ENCODE measurements at regions of chr2 and their contacts with region 1.

Region 1: DNA sequence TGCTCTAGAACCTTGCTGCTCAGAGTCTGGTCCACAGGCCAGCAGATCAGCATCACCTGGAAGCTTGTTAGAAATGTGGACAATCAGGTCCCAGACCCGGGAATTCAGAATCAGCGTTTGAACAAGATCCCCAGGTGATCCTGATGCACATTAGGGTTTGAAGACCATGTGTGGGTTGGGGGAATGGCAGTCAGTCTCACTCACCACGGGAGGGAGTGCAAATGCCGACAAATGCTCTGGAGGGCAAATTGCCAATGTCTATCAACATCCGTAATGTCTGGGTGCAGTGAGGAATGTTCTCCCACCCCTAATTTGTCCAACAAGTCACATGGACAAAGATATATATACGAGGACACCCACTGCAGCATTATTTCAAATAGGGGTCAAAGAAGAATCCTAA is 34.5 kb downstream of the INPP5D start:
- DNase-seq: no peak
- ATAC-seq: no peak
- H3K4me3 ChIP-seq: no peak overlapping the region
- H3K4me3 Mint-ChIP-seq: no peak overlapping the region
- H3K27ac ChIP-seq: no peak overlapping the region
- H3K27ac Mint-ChIP-seq: peak overlapping the region; percentile 12 to 82
- H3K4me1 ChIP-seq: peaks cover 7 to 52% of the 10 kb centered on the region in 2 experiments
- H3K4me1 Mint-ChIP-seq: peaks cover 74 to 83% (median 74%) of the 10 kb centered on the region in 3 donors
- H3K27me3 ChIP-seq: no peaks in the 10 kb centered on the region
- H3K27me3 Mint-ChIP-seq: no peaks in the 10 kb centered on the region

Region 2: GRCh38 chr2:232937278-232937906 is 157.2 kb before region 1 on chr2:
- CTCF ChIA-PET with region 1: no interaction called
- POLR2A ChIA-PET with region 1: interaction called in 1 of 2 experiments, 10 read pairs
- DNase-seq: no peak
- ATAC-seq: no peak
- H3K4me3 ChIP-seq: no peak overlapping the region
- H3K4me3 Mint-ChIP-seq: no peak overlapping the region
- H3K27ac ChIP-seq: no peak overlapping the region
- H3K27ac Mint-ChIP-seq: no peak overlapping the region
- H3K4me1 ChIP-seq: no peaks in the 10 kb centered on the region
- H3K4me1 Mint-ChIP-seq: peaks cover 0 to 3% (median 0%) of the 10 kb centered on the region in 3 donors
- H3K27me3 ChIP-seq: peaks cover 3 to 19% of the 10 kb centered on the region in 2 experiments
- H3K27me3 Mint-ChIP-seq: peaks cover 19 to 24% of the 10 kb centered on the region in 2 donors